Esophagus muscularis mucosa (tissue), 4 donors: ENCODE measurements at regions of chr16 and their contacts with region 1.

Region 1: GRCh38 chr16:19375561-19376158 is 42.0 kb upstream of the TMC5 start:
- DNase-seq: no peak
- H3K4me3 ChIP-seq: no peak overlapping the region
- H3K27ac ChIP-seq: no peak overlapping the region
- H3K4me1 ChIP-seq: peaks cover 0 to 10% (median 9%) of the 10 kb centered on the region in 4 donors
- H3K27me3 ChIP-seq: no peaks in the 10 kb centered on the region
- CTCF ChIP-seq: peak; percentile 86 to 94 (median 92)
- EP300 ChIP-seq: no peak
- POLR2A ChIP-seq: no peak

Region 2: GRCh38 chr16:18983565-18984424 is 391.9 kb before region 1 on chr16 and contains the start of gene TMC7:
- intact Hi-C with region 1: loop called (anchors 5 kb)
- DNase-seq: no peak
- H3K4me3 ChIP-seq: peak within 1 kb of the TSS; percentile 58 to 77 (median 68)
- H3K27ac ChIP-seq: peak within 1 kb of the TSS; percentile 57 to 82 (median 77)
- H3K4me1 ChIP-seq: peaks cover 6 to 14% (median 12%) of the 10 kb centered on the region in 4 donors
- H3K27me3 ChIP-seq: peaks cover 0 to 13% (median 0%) of the 10 kb centered on the region in 4 donors
- CTCF ChIP-seq: peak; percentile 53 to 63 (median 59)
- EP300 ChIP-seq: no peak
- POLR2A ChIP-seq: no peak
- total RNA-seq, gene TMC7: 0.17 to 0.83 (median 0.56) TPM

Region 3: GRCh38 chr16:19167710-19168370 is 207.8 kb before region 1 on chr16 and contains the start of gene SYT17:
- intact Hi-C with region 1: loop called (anchors 1 kb)
- DNase-seq: no peak
- H3K4me3 ChIP-seq: peak within 1 kb of the TSS; percentile 61 to 80 (median 66)
- H3K27ac ChIP-seq: peak within 1 kb of the TSS in 3 of 4 donors; percentile 60 to 72 (median 71)
- H3K4me1 ChIP-seq: peaks cover 14 to 25% (median 24%) of the 10 kb centered on the region in 4 donors
- H3K27me3 ChIP-seq: peaks cover 0 to 30% (median 9%) of the 10 kb centered on the region in 4 donors
- CTCF ChIP-seq: peak; percentile 82 to 87 (median 83)
- EP300 ChIP-seq: no peak
- POLR2A ChIP-seq: no peak
- total RNA-seq, gene SYT17: 5.0 to 8.7 (median 6.2) TPM

Region 4: GRCh38 chr16:19323596-19323995 is 52.1 kb before region 1 on chr16:
- intact Hi-C with region 1: no loop called
- DNase-seq: no peak
- H3K4me3 ChIP-seq: no peak overlapping the region
- H3K27ac ChIP-seq: no peak overlapping the region
- H3K4me1 ChIP-seq: no peaks in the 10 kb centered on the region
- H3K27me3 ChIP-seq: no peaks in the 10 kb centered on the region
- CTCF ChIP-seq: no peak
- EP300 ChIP-seq: no peak
- POLR2A ChIP-seq: no peak

Region 5: GRCh38 chr16:19563377-19563776 is 187.7 kb after region 1 on chr16:
- intact Hi-C with region 1: no loop called
- DNase-seq: no peak
- H3K4me3 ChIP-seq: no peak overlapping the region
- H3K27ac ChIP-seq: no peak overlapping the region
- H3K4me1 ChIP-seq: peaks cover 0 to 11% (median 2%) of the 10 kb centered on the region in 4 donors
- H3K27me3 ChIP-seq: no peaks in the 10 kb centered on the region
- CTCF ChIP-seq: no peak
- EP300 ChIP-seq: no peak
- POLR2A ChIP-seq: no peak